ENCODE measurements at regions of chr20 and their contacts with region 1.

Region 1: GRCh38 chr20:49344975-49345374 is 67.1 kb upstream of the ZNFX1 start:
- DNase-seq: no peak
- CTCF ChIP-seq: no peak

Region 2: DNA sequence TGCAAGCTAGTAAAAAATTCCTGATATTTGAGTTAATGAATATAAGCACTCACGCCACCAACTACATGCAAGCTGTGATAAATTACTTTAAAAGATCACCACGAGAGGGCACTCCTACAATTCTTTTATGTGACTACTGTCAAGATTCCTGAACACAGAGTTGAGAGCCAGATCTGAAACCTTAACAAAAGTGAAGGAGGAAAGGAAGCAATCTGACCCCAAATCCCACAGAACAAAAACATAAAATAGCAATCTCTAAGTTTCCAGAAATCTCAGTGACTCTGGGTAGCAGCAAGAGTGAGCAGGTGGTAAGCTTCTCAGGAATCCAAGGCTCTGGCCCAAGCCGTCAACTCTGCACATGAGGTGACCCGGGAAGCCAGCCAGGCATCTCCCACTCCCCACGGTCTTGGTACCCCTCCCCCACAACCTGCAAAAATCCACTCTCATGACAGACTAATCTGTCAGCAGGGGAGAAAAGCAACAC is 211.9 kb before region 1 on chr20:
- in situ Hi-C with region 1: no loop called
- DNase-seq: peak; percentile 62
- CTCF ChIP-seq: peak; percentile 15

Region 3: GRCh38 chr20:49508435-49509199 is 163.6 kb after region 1 on chr20:
- in situ Hi-C with region 1: loop called (anchors 25 kb)
- DNase-seq: peak; percentile 73
- CTCF ChIP-seq: peak; percentile 14

Region 4: GRCh38 chr20:49853640-49854039 is 508.7 kb after region 1 on chr20:
- in situ Hi-C with region 1: loop called (anchors 25 kb)
- DNase-seq: no peak
- CTCF ChIP-seq: no peak